Naive thymus-derived CD4-positive, alpha-beta T cell (primary cell): ENCODE measurements at regions of chr3 and their contacts with region 1.

Region 1: DNA sequence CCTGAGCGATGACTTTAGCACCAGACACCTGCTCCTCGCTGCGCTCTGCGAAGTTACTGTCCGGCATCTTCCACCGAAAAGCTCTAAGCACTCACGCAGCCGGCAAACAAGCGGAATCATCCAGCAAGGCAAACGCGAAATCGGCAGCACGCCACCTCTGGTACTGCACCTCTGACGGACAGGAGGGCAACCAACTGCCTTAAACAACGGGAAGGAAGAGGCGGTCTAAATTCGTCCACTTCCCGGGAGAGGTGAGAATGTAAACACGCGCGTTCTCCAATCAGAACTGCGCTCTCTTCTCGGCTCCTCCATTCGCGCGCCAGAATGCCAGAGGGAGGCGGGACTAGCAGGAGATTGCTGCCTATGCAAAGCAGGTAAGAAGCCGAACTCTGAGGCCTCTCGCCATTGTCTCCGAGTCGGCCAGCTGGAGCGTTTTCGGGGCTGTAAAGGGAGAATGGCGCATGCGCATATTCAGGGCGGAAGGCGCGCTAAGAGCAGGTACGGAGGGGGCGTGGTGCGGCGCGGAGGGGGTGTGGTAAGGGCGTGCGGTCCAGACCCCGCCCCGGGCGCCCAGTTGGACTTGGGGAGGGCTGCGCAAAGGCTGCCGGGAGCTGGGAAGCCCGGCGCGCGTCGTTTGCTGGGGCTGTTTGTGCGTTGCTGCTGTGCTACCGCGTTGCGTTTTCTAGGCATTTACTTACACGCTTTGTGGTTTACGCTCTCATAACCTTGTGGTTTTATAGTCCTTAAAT is at the starts of genes BTD and HACL1:
- DNase-seq: peak; percentile 95 to 100 (median 99)
- ATAC-seq: peak; percentile 92
- H3K4me3 ChIP-seq: peak within 1 kb of the TSS; percentile 93
- H3K4me3 Mint-ChIP-seq: peak within 1 kb of the TSS; percentile 93 to 100 (median 99)
- H3K27ac ChIP-seq: peak within 1 kb of the TSS; percentile 89
- H3K27ac Mint-ChIP-seq: peak within 1 kb of the TSS; percentile 92 to 100 (median 99)
- H3K4me1 ChIP-seq: peaks cover 25 to 31% of the 10 kb centered on the region in 2 donors
- H3K4me1 Mint-ChIP-seq: peaks cover 34 to 67% (median 62%) of the 10 kb centered on the region in 7 donors
- H3K27me3 ChIP-seq: no peaks in the 10 kb centered on the region
- H3K27me3 Mint-ChIP-seq: no peaks in the 10 kb centered on the region
- total RNA-seq, gene BTD: 6.8 to 23.3 (median 15.5) TPM
- total RNA-seq, gene HACL1: 18.7 to 41.4 (median 35.4) TPM

Region 2: DNA sequence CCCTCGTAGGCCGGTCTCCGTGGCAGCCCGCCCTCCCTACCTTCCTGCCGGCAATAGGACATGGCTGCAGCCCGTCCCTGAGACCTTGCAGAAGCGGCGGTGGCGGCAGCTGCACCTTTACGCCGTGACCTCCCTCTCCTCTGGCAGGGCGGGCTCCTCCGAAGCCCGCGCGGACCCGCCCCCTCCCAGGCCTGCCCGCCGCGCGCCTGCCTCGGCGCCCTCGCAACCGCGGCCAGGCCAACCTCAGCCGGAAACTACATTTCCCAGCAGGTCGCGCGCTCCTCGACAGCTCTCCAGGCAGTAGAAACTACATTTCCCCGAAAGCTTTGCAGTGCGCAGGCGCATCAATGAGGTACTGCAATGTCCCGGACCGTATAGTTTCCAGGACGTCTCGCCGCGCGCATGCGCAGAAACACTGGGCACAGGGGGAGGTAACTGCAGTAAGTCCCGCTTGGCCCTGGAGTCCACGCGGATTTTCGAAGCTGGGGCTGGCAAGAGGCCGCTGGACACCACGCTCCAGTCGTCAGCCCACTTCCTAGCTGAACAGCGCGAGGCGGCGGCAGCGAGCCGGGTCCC is 1476.9 kb before region 1 on chr3 and contains the starts of genes CHCHD4 and TMEM43:
- CTCF ChIA-PET with region 1: no interaction called
- POLR2A ChIA-PET with region 1: no interaction called
- intact Hi-C with region 1: loop called in 1 of 2 experiments (anchors 1 kb)
- DNase-seq: peak; percentile 91 to 99 (median 98)
- ATAC-seq: peak; percentile 96
- H3K4me3 ChIP-seq: peak within 1 kb of the TSS; percentile 100
- H3K4me3 Mint-ChIP-seq: peak within 1 kb of the TSS; percentile 93 to 98 (median 96)
- H3K27ac ChIP-seq: peak within 1 kb of the TSS; percentile 89
- H3K27ac Mint-ChIP-seq: peak within 1 kb of the TSS; percentile 87 to 97 (median 94)
- H3K4me1 ChIP-seq: peaks cover 28 to 30% of the 10 kb centered on the region in 2 donors
- H3K4me1 Mint-ChIP-seq: peaks cover 43 to 70% (median 63%) of the 10 kb centered on the region in 7 donors
- H3K27me3 ChIP-seq: no peaks in the 10 kb centered on the region
- H3K27me3 Mint-ChIP-seq: no peaks in the 10 kb centered on the region
- total RNA-seq, gene CHCHD4: 3.3 to 14.1 (median 8.4) TPM
- total RNA-seq, gene TMEM43: 30.1 to 54.8 (median 46.5) TPM

Region 3: GRCh38 chr3:14152242-14152962 is 1449.2 kb before region 1 on chr3:
- CTCF ChIA-PET with region 1: no interaction called
- POLR2A ChIA-PET with region 1: no interaction called
- intact Hi-C with region 1: no loop called
- DNase-seq: no peak
- ATAC-seq: peak; percentile 47
- H3K4me3 ChIP-seq: no peak overlapping the region
- H3K4me3 Mint-ChIP-seq: no peak overlapping the region
- H3K27ac ChIP-seq: no peak overlapping the region
- H3K27ac Mint-ChIP-seq: peak overlapping the region in 6 of 9 donors; percentile 25 to 78 (median 62)
- H3K4me1 ChIP-seq: no peaks in the 10 kb centered on the region
- H3K4me1 Mint-ChIP-seq: peaks cover 6 to 27% (median 22%) of the 10 kb centered on the region in 7 donors
- H3K27me3 ChIP-seq: no peaks in the 10 kb centered on the region
- H3K27me3 Mint-ChIP-seq: no peaks in the 10 kb centered on the region

Region 4: DNA sequence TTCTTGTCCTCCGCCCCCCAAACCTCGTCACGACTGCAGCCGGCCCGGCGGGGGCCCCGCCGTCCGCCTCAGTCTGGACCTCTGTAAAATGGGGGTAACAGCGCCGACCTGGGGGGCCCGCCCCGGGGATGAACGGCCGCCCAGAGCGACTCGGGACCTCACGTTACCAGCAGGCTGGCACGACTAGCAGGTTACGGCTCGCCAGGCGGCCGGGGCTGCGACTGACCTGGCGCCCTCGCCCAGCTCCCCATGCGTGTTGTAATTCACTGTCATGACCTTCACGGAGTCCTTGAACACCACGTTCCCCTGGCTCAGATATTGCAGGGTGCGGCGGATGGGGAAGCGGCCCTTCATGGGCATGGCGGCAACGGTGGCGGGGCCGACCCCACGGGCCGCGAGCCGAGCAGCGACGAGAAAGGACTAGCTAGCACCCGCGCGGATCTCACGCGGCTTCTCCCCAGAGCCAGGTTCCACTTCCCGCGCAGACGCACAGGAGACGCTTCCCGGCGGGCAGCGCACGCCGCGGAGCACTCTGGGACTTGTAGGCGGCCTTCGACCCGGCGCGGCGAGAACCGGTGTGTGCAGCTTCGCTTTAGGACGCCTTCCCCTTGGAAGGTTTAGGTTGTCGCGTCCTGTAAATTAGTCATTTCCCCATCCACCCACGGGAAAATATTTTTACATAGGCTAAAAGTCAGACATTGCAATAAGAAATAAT is 536.6 kb before region 1 on chr3 and contains the start of gene MRPS25:
- CTCF ChIA-PET with region 1: no interaction called
- POLR2A ChIA-PET with region 1: interaction called, 3 read pairs
- intact Hi-C with region 1: loop called in 1 of 2 experiments (anchors 1 kb)
- DNase-seq: peak; percentile 80 to 90 (median 87)
- ATAC-seq: peak; percentile 99
- H3K4me3 ChIP-seq: peak within 1 kb of the TSS; percentile 86
- H3K4me3 Mint-ChIP-seq: peak within 1 kb of the TSS; percentile 94 to 98 (median 96)
- H3K27ac ChIP-seq: peak within 1 kb of the TSS; percentile 87
- H3K27ac Mint-ChIP-seq: peak within 1 kb of the TSS; percentile 87 to 99 (median 94)
- H3K4me1 ChIP-seq: peaks cover 7 to 14% of the 10 kb centered on the region in 2 donors
- H3K4me1 Mint-ChIP-seq: peaks cover 16 to 29% (median 22%) of the 10 kb centered on the region in 7 donors
- H3K27me3 ChIP-seq: no peaks in the 10 kb centered on the region
- H3K27me3 Mint-ChIP-seq: no peaks in the 10 kb centered on the region
- total RNA-seq, gene MRPS25: 57.6 to 104 (median 76.0) TPM

Region 5: DNA sequence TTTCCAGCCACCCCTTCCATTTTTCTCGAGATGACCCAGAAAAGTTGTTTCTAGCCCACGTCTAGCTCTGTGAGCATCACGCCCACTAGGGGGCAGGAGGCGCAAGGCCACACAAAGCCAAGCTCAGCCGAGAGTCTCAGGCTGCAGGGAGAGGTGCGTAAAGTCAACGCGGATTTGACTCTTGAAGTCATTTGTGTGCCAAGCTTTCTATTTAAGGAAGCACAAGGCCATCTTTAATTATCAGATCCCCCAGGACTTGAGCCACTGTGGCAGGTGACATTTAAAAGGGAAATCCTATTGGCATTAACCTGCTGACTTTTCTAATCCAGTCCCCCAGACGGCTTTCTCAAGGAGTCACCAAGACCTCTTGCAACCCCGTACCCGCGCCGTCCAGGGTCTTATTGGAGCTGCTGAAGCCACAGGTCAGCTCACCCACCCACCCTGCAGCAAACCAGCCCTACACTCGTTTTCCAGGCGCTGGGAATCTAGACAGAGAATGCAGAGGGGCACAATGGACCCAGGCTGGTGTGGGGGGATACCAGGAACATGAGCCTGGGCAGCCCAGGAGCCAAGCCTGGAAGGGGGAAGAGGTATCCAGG is 333.4 kb before region 1 on chr3:
- CTCF ChIA-PET with region 1: no interaction called
- POLR2A ChIA-PET with region 1: no interaction called
- intact Hi-C with region 1: loop called in 1 of 2 experiments (anchors 1 kb)
- DNase-seq: peak; percentile 75 to 88 (median 82)
- ATAC-seq: peak; percentile 56
- H3K4me3 ChIP-seq: peak overlapping the region; percentile 4
- H3K4me3 Mint-ChIP-seq: peak overlapping the region in 9 of 10 donors; percentile 8 to 72 (median 56)
- H3K27ac ChIP-seq: no peak overlapping the region
- H3K27ac Mint-ChIP-seq: peak overlapping the region; percentile 32 to 84 (median 70)
- H3K4me1 ChIP-seq: peaks cover 54 to 69% of the 10 kb centered on the region in 2 donors
- H3K4me1 Mint-ChIP-seq: peaks cover 45 to 90% (median 73%) of the 10 kb centered on the region in 7 donors
- H3K27me3 ChIP-seq: no peaks in the 10 kb centered on the region
- H3K27me3 Mint-ChIP-seq: peaks cover 0 to 3% (median 0%) of the 10 kb centered on the region in 5 donors

Region 6: GRCh38 chr3:15623535-15624440 is 22.2 kb after region 1 on chr3:
- CTCF ChIA-PET with region 1: no interaction called
- POLR2A ChIA-PET with region 1: interaction called, 3 read pairs
- intact Hi-C with region 1: loop called in 1 of 2 experiments (anchors 1 kb)
- DNase-seq: peak in 5 of 9 donors; percentile 10 to 38 (median 32)
- ATAC-seq: peak; percentile 79
- H3K4me3 ChIP-seq: peak overlapping the region; percentile 58
- H3K4me3 Mint-ChIP-seq: peak overlapping the region; percentile 29 to 89 (median 76)
- H3K27ac ChIP-seq: peak overlapping the region; percentile 59
- H3K27ac Mint-ChIP-seq: peak overlapping the region; percentile 44 to 90 (median 84)
- H3K4me1 ChIP-seq: peaks cover 16 to 23% of the 10 kb centered on the region in 2 donors
- H3K4me1 Mint-ChIP-seq: peaks cover 18 to 50% (median 41%) of the 10 kb centered on the region in 7 donors
- H3K27me3 ChIP-seq: no peaks in the 10 kb centered on the region
- H3K27me3 Mint-ChIP-seq: no peaks in the 10 kb centered on the region

Region 7: DNA sequence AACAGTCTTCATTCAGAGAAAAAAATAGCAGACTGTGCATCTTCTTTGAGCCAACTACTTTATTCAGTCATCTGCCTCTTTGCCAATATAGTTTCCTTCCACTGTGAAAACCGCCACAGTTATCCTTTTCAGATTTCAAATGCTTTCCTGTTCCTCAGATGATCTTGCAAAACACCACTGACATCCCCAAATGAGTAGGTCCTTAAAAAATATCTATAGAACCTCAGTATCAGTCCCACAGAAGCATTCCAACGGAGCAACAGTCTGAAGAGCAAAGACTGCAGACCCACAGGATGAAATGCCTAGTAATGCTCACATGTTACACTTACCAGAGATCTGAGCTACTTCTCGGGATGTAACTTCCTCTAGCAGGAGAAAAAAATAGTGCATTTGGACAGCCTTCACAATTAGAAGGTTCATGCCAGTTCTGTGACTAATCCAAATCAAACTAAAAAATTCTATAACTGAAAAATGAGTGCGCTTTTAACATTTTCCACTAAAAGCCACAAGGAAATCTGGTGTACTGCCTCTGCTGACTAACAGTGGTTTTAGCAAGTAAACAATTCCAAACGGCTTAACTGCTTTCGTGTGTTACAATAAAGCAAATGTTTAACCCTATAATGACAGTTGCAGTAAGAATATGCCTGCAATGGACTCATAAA is 196.2 kb after region 1 on chr3 and contains the start of gene ANKRD28:
- CTCF ChIA-PET with region 1: no interaction called
- POLR2A ChIA-PET with region 1: no interaction called
- intact Hi-C with region 1: loop called in 1 of 2 experiments (anchors 1 kb)
- DNase-seq: peak in 5 of 9 donors; percentile 8 to 29 (median 20)
- ATAC-seq: peak; percentile 67
- H3K4me3 ChIP-seq: peak within 1 kb of the TSS; percentile 0
- H3K4me3 Mint-ChIP-seq: peak within 1 kb of the TSS in 9 of 10 donors; percentile 28 to 96 (median 57)
- H3K27ac ChIP-seq: no peak within 1 kb of the TSS
- H3K27ac Mint-ChIP-seq: peak within 1 kb of the TSS in 8 of 9 donors; percentile 2 to 97 (median 50)
- H3K4me1 ChIP-seq: peaks cover 26 to 38% of the 10 kb centered on the region in 2 donors
- H3K4me1 Mint-ChIP-seq: peaks cover 42 to 84% (median 76%) of the 10 kb centered on the region in 7 donors
- H3K27me3 ChIP-seq: no peaks in the 10 kb centered on the region
- H3K27me3 Mint-ChIP-seq: no peaks in the 10 kb centered on the region
- total RNA-seq, gene ANKRD28: 27.4 to 70.4 (median 43.2) TPM

Region 8: DNA sequence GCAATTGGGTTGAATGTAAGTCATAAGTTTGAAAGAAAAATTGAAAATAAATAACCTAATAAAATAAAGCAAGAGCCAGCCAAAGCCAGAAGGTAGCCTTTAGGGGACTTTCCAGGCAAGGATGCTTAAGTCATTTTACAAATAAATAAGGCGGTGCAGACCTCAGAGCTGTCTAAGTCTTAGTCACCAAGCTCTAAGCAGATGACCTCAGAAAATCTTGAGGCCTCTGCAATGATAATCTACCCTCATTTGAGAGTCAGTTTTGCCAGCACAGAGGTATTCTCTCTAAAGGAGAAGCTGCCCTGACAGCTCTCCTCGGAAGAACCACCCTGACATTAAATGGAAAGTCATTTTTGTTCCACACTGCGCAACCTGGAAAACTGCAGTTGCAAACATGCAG is 777.3 kb after region 1 on chr3:
- CTCF ChIA-PET with region 1: no interaction called
- POLR2A ChIA-PET with region 1: no interaction called
- intact Hi-C with region 1: loop called in 1 of 2 experiments (anchors 10 kb)
- DNase-seq: no peak
- ATAC-seq: peak; percentile 19
- H3K4me3 ChIP-seq: no peak overlapping the region
- H3K4me3 Mint-ChIP-seq: peak overlapping the region in 8 of 10 donors; percentile 26 to 85 (median 42)
- H3K27ac ChIP-seq: no peak overlapping the region
- H3K27ac Mint-ChIP-seq: peak overlapping the region in 8 of 9 donors; percentile 54 to 94 (median 90)
- H3K4me1 ChIP-seq: peaks cover 28 to 60% of the 10 kb centered on the region in 2 donors
- H3K4me1 Mint-ChIP-seq: peaks cover 52 to 98% (median 87%) of the 10 kb centered on the region in 7 donors
- H3K27me3 ChIP-seq: no peaks in the 10 kb centered on the region
- H3K27me3 Mint-ChIP-seq: no peaks in the 10 kb centered on the region

Region 9: DNA sequence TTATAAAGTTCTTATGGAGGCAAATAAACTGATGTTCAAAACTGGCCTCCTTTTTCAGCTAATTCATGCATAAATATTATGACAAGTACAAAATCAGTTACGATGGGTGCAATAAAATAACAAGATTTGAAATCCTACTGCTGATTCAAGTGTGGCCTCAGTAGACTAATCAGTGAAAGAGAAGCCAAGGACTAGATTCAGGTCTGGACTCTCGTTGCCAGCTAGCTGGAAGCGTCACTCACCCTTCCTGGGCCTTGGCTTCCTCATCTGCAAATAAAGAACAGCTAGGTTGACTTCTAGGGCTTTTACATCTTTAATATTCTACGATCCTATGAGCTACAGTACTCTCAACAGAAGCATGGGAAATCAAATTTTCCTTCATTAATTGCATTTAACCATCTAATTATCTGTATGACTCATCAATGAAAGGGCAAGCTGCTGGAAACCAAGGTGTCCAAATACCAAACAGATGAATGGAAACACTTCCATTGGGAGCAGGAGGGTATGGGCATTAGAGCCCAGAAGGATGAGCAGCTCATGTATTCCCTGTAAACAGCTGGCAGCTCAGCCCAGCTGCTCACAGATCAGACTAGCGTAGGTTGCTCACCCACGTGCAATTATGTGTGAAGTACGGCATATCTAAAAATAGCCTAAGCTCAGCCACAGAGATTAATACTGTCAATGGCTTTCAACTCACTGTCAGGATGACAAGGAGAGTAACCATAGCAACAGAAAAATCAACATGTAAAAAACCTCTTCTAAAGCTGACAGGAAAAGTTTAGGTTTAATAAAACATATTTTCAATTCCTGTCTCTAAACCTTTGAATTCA is 1578.0 kb after region 1 on chr3:
- CTCF ChIA-PET with region 1: no interaction called
- POLR2A ChIA-PET with region 1: no interaction called
- intact Hi-C with region 1: no loop called
- DNase-seq: peak in 7 of 9 donors; percentile 5 to 50 (median 19)
- ATAC-seq: peak; percentile 79
- H3K4me3 ChIP-seq: no peak overlapping the region
- H3K4me3 Mint-ChIP-seq: no peak overlapping the region
- H3K27ac ChIP-seq: no peak overlapping the region
- H3K27ac Mint-ChIP-seq: no peak overlapping the region
- H3K4me1 ChIP-seq: peaks cover 0 to 21% of the 10 kb centered on the region in 2 donors
- H3K4me1 Mint-ChIP-seq: peaks cover 0 to 39% (median 13%) of the 10 kb centered on the region in 7 donors
- H3K27me3 ChIP-seq: no peaks in the 10 kb centered on the region
- H3K27me3 Mint-ChIP-seq: peaks cover 0 to 3% (median 0%) of the 10 kb centered on the region in 5 donors